Adrenal gland (tissue), 19 donors: ENCODE measurements at regions of chr2 and their contacts with region 1.

Region 1: DNA sequence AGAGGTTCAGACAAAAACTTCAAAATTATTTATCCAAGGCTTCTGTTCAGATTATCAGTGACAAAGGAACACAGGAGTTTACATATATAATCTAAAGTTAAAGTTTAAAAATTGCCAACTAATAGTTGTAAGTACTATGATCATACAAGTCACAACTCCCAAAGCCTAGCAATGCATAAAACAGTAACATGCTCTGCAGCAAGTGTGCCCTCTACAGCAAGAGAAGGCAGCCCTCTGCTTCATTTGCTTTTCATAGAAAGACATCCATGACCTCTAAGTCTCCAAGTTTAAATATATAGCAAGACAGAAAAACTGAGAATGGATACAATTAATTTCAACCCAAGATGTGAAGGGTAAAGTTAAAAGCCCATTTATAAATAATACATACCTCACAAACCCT is 13.3 kb downstream of the RAB1A start:
- DNase-seq: no peak
- H3K4me3 ChIP-seq: no peak overlapping the region
- H3K27ac ChIP-seq: no peak overlapping the region
- H3K4me1 ChIP-seq: peaks cover 0 to 68% of the 10 kb centered on the region in 2 donors
- H3K27me3 ChIP-seq: no peaks in the 10 kb centered on the region
- CTCF ChIP-seq: no peak
- POLR2A ChIP-seq: no peak

Region 2: DNA sequence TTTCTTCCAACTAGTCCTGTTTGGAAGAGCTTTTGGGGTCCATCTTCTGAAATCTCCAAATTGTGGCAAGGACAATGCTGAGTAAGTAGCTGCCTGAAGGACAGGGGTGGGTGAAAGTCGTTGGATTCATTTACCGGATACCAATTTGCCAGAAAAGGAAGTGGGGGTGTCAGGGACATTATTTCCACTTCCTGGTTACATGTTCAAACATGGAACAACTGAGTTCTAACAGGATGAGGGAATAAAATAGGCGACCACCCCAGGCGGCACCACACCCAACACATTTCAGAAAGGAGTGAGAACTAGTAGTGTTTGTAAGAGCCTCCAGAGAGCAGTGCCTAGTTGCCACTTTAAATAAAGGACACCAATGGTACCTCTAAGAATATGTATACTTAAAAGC is 304.4 kb before region 1 on chr2:
- intact Hi-C with region 1: no loop called
- DNase-seq: peak in 1 of 7 donors; percentile 22
- H3K4me3 ChIP-seq: no peak overlapping the region
- H3K27ac ChIP-seq: no peak overlapping the region
- H3K4me1 ChIP-seq: no peaks in the 10 kb centered on the region
- H3K27me3 ChIP-seq: no peaks in the 10 kb centered on the region
- CTCF ChIP-seq: no peak
- POLR2A ChIP-seq: no peak

Region 3: GRCh38 chr2:65081232-65081685 is 35.4 kb before region 1 on chr2:
- intact Hi-C with region 1: loop called in 1 of 2 experiments (anchors 5 kb)
- DNase-seq: peak in 4 of 7 donors; percentile 46 to 70 (median 56)
- H3K4me3 ChIP-seq: no peak overlapping the region
- H3K27ac ChIP-seq: peak overlapping the region in 3 of 5 donors; percentile 17 to 47 (median 35)
- H3K4me1 ChIP-seq: peaks cover 10 to 22% of the 10 kb centered on the region in 2 donors
- H3K27me3 ChIP-seq: no peaks in the 10 kb centered on the region
- CTCF ChIP-seq: no peak
- POLR2A ChIP-seq: no peak